ENCODE measurements at regions of chr1 and their contacts with region 1.

Region 1: GRCh38 chr1:77406661-77407060 is 124.8 kb downstream of the AK5 start:
- DNase-seq: no peak

Region 2: DNA sequence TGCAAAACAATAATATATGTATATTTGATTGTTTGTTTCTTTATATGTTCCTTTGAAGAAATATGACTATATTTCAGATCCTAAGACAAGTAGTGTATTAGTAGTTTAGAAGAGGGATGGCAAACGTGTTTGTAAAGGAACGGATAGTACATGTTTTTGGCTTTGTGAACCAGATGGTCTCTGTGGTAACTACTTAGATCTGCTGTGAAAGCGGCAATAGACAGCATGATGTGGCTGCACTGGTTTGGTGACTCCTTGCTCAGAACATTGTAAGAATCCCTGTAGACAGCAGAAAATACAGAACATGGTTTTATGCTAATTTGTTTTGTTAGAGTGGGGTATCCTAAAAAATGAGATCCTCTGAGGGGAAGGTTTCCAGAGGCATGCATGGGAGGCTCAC is 1679.1 kb before region 1 on chr1:
- intact Hi-C with region 1: no loop called
- DNase-seq: no peak

Region 3: DNA sequence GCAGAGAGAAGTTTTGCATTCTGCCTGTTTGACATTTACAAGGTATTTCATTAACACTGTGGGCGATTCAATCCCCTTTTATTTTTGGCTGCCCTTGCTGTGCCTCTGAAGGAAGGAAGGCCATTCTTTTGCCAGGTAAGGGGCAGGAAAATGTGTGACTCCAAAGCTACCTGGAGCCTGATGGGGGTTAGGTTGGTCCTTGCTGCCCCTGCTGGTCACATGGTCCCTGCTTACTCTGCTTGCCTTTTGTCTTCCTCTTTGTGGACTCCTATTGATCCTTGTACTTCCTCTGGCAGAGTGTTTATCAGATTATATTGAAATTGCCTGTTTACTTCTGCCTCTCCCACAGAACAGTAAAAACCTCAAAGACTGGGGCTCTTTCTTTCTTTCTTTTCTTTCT is 1266.4 kb before region 1 on chr1:
- intact Hi-C with region 1: loop called in 1 of 2 experiments (anchors 5 kb)
- DNase-seq: no peak

Region 4: GRCh38 chr1:77978969-77979876 is 572.6 kb after region 1 on chr1 and contains the start of gene FUBP1:
- intact Hi-C with region 1: no loop called
- DNase-seq: peak; percentile 98
- total RNA-seq, gene FUBP1: 90.7 to 99.3 TPM